Dorsolateral prefrontal cortex (tissue), 120 donors: ENCODE measurements at regions of chr1 and their contacts with region 1.

Region 1: DNA sequence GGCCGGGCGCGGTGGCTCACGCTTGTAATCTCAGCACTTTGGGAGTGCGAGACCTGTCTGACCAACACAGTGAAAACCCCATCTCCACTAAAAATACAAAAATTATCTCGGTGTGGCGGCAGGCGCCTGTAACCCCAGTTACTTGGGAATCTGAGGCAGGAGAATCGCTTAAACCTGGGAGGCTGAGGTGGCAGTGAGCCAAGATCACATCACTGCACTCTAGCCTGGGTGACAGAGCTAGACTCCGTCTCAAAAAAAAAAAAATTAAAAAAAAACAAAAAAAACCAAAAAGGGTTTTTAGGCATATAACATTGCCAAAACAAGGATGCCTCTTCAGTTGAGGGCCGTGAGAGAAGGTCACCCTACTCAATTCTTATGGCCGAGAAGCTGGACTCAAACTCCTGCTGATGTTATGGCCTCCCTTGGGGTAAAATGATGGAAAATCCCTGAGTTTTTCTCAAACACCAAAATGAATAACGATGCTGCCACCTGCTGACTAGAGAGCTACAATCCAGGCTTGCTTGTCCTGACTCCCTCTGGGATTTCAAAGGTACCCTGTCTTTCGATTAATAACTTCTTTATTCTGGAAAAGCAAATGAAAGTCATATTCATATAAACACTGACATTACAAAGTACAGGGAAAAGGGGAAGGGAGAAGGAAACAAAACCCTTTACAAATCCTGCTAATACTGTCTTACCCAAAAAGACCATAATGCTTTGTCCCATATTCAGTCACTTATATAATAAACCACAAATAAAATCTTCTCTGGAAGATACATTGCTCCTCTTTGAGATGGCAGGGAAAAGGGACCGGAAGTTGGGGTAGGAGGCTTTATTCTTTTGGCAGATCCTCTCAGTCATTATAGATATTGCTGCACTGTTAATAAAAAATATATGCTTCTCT is 10.7 kb downstream of the RAB42 start:
- DNase-seq: peak in 6 of 10 donors; percentile 52 to 87 (median 60)
- H3K4me3 ChIP-seq: peak overlapping the region in 4 of 59 donors; percentile 7 to 14 (median 12)
- H3K27ac ChIP-seq: peak overlapping the region in 58 of 59 donors; percentile 2 to 96 (median 70)
- H3K27me3 ChIP-seq: no peaks in the 10 kb centered on the region
- CTCF ChIP-seq: peak; percentile 38 to 95 (median 83)

Region 2: DNA sequence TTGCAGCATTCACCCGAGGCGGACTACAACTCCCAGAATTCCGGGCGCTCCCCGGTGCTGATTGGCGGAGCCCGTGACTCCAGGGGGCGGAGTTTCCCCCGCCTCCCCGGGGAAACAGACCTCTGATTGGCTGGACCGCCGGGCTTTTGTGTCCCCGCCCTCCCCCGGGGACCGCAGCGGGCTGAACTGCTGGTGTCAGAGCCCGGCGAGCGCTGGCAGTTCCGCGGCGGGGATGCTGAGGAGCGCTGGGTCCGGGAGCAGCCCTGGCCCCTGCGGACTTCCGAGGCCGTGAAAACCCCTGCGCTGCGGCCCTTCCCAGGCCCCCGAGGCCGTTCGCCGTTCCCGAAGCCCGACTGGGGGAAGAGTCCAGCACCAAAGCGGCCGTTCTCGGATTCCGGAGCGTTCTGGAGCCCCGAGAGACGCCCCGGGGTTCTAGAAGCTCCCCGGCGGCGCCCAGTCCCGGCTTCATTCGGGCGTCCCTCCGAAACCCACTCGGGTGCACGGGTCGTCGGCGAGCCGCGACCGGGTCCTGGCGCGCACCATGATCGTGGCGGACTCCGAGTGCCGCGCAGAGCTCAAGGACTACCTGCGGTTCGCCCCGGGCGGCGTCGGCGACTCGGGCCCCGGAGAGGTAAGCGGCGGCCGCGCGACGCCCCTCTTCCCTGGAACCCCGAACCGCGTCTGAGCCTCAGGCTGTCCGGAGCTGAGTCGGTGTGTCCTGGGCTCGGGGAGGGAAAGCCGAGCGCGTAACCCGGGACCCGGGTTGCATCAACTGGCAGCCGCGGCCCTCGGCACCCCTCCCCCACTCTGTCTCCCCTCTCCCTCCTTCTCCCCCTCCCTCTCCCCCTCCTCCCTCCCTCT is 343.3 kb before region 1 on chr1 and contains the start of gene SESN2:
- intact Hi-C with region 1: loop called in 1 of 2 experiments (anchors 10 kb)
- DNase-seq: peak; percentile 99 to 100 (median 99)
- H3K4me3 ChIP-seq: peak within 1 kb of the TSS; percentile 68 to 100 (median 95)
- H3K27ac ChIP-seq: peak within 1 kb of the TSS in 55 of 59 donors; percentile 41 to 94 (median 82)
- H3K27me3 ChIP-seq: no peaks in the 10 kb centered on the region
- CTCF ChIP-seq: peak in 35 of 56 donors; percentile 10 to 64 (median 31)
- total RNA-seq, gene SESN2: 6.5 to 26.1 (median 11.8) TPM

Region 3: GRCh38 chr1:28359592-28360239 is 243.1 kb before region 1 on chr1:
- intact Hi-C with region 1: loop called (anchors 2 to 10 kb)
- DNase-seq: peak in 9 of 10 donors; percentile 62 to 82 (median 70)
- H3K4me3 ChIP-seq: no peak overlapping the region
- H3K27ac ChIP-seq: no peak overlapping the region
- H3K27me3 ChIP-seq: no peaks in the 10 kb centered on the region
- CTCF ChIP-seq: peak; percentile 53 to 86 (median 72)

Region 4: DNA sequence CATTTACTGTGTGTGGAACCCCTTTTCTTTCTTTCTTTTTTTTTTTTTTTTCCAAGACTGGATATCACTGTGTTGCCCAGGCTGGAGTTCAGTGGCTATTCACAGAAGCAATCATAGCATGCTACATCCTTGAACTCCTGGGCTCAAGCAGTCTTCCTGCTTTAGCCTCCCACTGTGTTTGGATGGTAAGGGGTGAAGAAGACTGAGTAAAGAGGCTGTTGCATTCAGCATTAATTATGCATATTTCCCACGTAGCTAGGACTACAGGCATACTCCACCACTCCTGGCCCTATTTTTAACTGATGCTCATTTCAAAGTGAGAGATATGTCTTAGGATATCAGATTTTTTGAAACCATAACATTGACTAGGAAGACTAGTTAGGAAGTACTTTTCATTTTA is 193.7 kb before region 1 on chr1:
- intact Hi-C with region 1: loop called in 1 of 2 experiments (anchors 5 kb)
- DNase-seq: no peak
- H3K4me3 ChIP-seq: no peak overlapping the region
- H3K27ac ChIP-seq: peak overlapping the region in 1 of 59 donors; percentile 16
- H3K27me3 ChIP-seq: no peaks in the 10 kb centered on the region
- CTCF ChIP-seq: no peak

Region 5: DNA sequence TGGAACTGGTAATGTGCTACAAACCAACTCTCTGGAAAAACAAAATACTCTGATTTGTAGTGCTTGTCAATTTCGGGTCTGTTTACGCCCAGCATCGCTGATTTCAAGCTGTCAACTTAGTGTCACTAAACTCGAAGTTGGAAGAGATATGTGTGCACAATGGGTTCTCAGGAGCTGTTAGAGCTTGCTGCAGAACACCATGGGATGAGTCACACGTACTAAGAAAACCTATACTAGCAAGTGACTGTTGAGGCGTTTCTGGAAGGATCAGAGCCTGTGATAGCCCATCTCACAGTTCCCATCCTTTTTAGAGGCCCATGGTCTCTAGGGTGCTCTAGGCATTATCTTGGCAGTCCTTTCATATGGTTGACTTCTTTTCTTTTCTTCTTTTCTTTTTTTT is 80.1 kb after region 1 on chr1:
- intact Hi-C with region 1: no loop called
- DNase-seq: no peak
- H3K4me3 ChIP-seq: no peak overlapping the region
- H3K27ac ChIP-seq: no peak overlapping the region
- H3K27me3 ChIP-seq: no peaks in the 10 kb centered on the region
- CTCF ChIP-seq: no peak